GM10248 (cell line): ENCODE measurements at regions of chr3 and their contacts with region 1.

Region 1: GRCh38 chr3:112489674-112490479 is 9.4 kb downstream of the BTLA start:
- DNase-seq: no peak
- CTCF ChIP-seq: no peak

Region 2: GRCh38 chr3:112394141-112394631 is 95.7 kb before region 1 on chr3:
- CTCF ChIA-PET with region 1: no interaction called
- POLR2A ChIA-PET with region 1: no interaction called
- DNase-seq: no peak
- CTCF ChIP-seq: no peak

Region 3: DNA sequence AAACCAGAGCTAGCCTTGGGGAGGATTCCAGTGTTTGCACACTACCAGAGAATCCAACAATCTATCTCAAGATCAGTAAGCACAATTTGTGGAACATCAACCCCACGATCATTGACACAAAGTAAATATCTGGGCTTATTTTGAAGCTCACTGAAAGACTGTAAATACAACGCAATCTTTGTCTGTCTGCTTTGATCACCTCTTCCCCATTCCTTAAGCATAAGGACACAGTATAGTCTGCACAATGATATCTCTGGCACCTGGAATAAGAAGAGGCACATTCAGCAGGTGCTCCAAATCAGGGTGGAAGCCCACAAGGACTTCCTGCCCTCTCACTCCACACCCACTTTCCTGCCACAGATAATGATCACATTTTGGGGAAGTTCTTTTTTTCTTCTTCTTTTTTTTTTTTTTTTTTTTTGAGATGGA is 16.7 kb before region 1 on chr3:
- CTCF ChIA-PET with region 1: interaction called, 10 read pairs
- POLR2A ChIA-PET with region 1: no interaction called
- DNase-seq: peak; percentile 28
- CTCF ChIP-seq: no peak

Region 4: GRCh38 chr3:112505907-112506306 is 16.0 kb after region 1 on chr3:
- CTCF ChIA-PET with region 1: interaction called, 22 read pairs
- POLR2A ChIA-PET with region 1: no interaction called
- DNase-seq: no peak
- CTCF ChIP-seq: no peak